ENCODE measurements at regions of chr12 and their contacts with region 1.

Region 1: DNA sequence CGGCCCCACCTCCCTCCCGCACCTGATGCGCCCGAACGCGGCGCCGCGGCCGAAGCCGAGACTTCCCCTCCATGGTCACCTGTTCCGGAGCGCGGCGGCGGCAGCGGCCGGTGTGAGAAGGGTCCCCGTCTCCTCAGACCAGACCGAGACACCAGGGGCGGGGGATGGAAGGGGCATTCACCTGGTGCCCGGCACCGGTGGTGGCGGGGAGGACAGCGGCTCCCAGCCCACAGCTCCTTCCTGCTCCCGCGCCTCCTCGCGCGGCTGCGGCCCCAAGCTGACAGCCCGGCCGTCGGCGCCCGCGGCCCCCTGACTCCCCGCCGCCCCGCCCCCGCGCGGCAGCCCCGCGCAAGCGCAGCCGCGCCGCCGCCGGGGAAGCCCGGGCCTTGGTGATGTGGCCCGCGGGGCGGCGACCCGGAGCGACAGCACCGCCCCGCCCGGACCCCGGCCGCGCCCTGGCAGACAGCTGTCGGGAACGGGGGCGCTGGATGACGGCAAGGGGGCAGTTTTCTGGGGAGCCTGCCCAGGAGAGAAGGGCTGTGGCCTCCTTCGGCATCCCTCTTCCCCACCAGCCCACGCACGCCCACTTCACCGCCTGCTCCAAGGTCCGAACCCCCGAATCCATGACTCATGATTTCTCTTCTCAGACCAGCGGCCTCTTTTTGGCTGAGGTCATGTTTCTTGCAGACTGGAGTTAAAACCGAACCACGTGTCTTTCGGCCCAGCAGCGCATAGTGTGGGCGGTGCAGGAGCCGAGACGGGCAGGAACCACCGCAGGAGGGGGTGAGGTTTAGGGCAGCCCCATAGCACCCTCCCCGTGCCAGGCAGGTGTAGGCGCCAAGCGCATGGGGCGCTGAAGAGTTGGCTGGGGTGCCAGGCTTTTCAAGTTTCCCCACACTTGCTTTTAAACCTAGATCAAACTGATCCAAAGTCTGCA is at the start of gene SLC41A2:
- DNase-seq: peak; percentile 85
- H3K4me3 Mint-ChIP-seq: peak within 1 kb of the TSS; percentile 84
- H3K27ac Mint-ChIP-seq: peak within 1 kb of the TSS; percentile 72
- H3K4me1 Mint-ChIP-seq: peaks cover 19% of the 10 kb centered on the region
- H3K27me3 Mint-ChIP-seq: peaks cover 14% of the 10 kb centered on the region
- total RNA-seq, gene SLC41A2: 2.7 to 3.5 TPM

Region 2: DNA sequence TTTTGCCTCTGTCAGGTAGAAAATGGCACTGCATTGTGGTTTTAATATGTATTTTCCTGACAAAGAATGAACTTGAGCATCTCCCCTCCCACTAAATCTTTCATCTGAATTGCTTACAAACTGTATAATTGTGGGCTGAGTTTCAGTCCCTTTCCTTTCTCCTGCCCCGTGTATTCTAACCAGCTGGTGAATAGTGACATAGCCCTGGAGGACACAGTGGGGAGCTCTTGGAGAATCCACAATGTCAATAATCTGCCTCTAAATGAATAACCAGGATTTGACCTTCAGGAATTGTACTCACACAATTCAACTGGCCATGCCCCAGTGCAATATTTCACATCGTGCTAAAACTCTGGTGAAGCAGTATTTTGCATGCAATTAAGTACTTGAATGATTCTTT is 1639.7 kb before region 1 on chr12:
- CTCF ChIA-PET with region 1: no interaction called
- intact Hi-C with region 1: no loop called
- DNase-seq: no peak
- H3K4me3 Mint-ChIP-seq: no peak overlapping the region
- H3K27ac Mint-ChIP-seq: no peak overlapping the region
- H3K4me1 Mint-ChIP-seq: peaks cover 5% of the 10 kb centered on the region
- H3K27me3 Mint-ChIP-seq: no peaks in the 10 kb centered on the region

Region 3: DNA sequence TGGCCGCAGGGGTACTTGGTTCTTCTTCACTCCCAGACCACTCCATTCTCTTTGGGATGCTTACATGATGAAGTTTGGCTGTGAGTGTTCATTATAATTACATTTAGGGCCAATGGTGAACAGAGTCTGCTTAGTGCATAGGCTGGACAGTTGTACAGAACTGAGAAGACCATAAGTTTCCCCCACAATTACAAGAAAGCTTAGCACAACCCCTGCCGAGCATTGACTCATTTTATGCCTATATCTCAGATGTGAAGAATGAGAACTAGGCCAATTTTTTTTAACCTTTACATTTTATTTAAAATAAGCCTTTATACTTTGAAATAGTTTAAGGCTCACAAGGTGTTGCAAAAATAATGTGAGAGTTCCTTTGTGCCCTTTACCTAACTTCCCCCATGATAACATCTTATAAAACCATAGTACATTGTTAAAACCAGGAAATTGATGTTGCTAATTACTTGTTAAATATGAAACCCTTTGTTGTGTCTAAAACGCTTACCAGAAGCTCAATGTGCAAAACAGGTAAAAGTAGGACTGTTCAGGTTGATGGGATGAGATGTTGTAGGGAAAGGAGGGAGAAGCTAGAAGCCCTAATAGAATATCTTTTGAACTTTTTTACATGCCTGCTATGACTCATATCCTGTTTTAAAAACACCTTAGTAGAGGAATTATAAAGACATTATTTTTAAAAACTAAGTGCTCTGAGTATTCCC is 78.8 kb after region 1 on chr12:
- CTCF ChIA-PET with region 1: interaction called, 3 read pairs
- intact Hi-C with region 1: loop called (anchors 2 kb)
- DNase-seq: no peak
- H3K4me3 Mint-ChIP-seq: no peak overlapping the region
- H3K27ac Mint-ChIP-seq: peak overlapping the region; percentile 65
- H3K4me1 Mint-ChIP-seq: peaks cover 38% of the 10 kb centered on the region
- H3K27me3 Mint-ChIP-seq: no peaks in the 10 kb centered on the region